ENCODE measurements at regions of chr11 and their contacts with region 1.

Region 1: DNA sequence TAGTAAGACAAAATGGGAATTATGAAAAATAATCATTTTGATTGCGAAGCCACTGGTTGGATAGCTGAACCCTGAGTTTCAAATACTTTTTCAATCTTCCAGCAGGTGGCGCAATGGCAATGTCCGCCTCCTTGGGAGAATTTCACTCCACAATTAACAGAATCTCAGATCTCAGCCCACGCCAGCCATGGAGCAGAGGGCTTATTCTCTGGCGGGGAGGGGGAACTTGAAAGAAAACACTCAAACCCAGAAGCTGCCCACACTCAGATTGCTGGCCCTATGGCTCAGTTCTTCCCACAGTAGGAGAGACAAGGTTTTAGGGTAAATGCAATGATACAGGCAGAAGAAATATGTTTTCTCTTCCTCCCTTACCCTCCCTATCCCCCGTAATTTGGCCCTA is 38.7 kb upstream of the RCN1 start:
- DNase-seq: peak; percentile 40
- ATAC-seq: peak; percentile 46

Region 2: DNA sequence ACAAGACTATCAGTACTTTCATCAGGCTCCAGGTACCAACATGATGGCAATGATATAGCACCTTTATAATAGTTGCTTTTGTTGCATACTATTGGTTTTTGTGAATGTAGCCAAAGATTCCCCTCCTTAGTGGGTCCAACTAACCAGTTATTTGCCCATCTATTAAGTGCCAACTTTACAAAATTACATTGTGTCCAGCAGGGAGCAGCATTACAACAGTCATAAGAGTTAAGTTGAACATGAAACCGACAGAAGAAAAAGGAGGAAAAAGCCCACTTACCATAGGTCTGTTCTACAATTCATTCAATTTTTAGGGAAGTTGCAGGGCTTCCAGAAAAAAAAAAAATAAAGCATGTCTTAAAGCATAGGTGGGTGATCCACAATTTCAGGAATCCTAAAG is 564.4 kb before region 1 on chr11:
- intact Hi-C with region 1: no loop called
- DNase-seq: no peak
- ATAC-seq: no peak

Region 3: DNA sequence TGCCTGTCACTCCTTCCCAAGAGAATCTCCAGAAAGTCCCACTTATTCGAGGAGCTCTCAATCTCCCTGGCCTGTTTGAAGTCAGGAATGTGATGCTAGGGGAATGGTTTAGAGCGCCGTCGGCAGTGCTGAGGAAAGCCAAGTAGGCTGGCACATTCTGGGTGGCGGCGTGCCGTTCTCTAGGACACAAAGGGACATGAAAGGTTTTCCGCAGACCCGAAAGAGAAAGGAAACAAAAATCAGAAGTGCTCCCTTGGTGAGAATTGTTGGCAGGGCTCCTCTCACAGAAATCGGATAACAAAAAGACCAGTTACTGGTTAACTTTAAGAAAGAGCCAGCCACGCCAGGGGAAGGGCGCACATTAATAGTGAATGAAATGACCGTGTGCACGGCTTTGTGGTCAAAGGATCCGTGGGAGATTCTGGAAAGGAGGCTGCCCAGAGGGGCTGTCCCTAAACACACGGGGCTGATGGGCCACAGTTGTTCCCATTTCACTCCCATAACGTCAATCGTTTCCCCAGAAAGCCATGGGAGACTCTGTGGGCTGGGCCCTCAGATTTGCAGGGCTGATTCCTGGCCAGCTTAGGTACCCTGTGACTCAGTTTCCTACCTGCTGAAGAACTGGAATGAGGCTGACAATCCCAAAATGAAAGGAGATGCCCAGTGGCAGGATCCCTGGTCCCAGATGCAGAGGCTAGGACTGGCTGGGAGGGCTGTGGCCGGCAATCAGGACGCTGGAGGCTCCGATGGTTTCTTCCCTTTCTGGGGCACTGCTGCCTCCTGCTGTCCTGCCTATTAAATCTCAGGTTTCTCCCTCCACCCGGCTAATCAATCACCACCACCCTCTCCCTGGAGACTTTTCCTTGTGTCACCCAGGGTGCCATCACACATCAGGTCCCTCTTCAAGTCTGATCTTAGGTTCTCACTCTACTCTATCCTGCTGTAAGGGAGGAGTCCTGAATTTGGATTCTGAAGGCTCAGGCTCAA is 120.9 kb after region 1 on chr11:
- intact Hi-C with region 1: loop called (anchors 1 kb)
- DNase-seq: peak; percentile 63
- ATAC-seq: peak; percentile 86